CD4-positive, alpha-beta memory T cell (primary cell): ENCODE measurements at regions of chr20 and their contacts with region 1.

Region 1: DNA sequence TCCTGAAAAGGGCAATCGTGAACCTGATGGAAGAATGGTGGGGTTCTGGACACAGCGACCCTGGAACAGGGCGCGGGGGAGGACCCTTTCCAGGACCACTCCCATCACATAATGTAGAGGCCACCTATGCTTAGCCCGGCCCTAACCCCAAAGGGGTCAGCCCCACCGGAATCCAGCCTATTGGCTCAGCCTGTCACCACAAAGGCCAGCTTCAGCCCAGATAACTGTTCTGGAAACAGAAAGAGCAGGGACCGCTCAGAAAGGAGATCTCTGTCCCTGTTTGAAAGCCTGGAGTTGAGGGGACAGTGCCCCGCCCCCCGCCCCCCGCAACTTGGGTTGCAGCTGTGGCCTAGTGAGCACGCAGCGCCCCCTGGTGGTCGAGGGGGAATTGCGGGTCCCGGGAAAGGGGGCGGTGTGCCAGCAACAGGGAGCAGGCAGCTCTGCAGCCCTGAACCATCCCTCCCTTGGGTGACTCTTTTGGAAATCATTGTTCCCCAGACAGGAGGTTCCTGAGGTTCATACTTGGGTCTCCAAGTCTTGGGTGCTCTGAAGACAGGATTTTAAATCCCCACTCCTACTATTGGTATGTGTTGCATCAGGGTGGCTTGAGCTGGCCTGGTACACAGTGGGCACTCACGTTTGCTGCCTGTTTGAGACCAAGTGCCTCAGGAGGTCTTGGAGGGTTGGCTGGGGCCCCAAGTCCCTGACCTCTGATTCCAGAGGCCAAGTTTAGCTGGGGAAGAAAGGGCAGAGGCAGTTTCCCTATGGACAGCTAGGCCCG is 1.5 kb downstream of the SIGLEC1 start:
- DNase-seq: peak; percentile 55 to 69 (median 57)
- H3K4me3 ChIP-seq: no peak overlapping the region
- H3K4me3 Mint-ChIP-seq: no peak overlapping the region
- H3K27ac ChIP-seq: no peak overlapping the region
- H3K27ac Mint-ChIP-seq: no peak overlapping the region
- H3K4me1 ChIP-seq: no peaks in the 10 kb centered on the region
- H3K4me1 Mint-ChIP-seq: peaks cover 0 to 10% (median 2%) of the 10 kb centered on the region in 4 donors
- H3K27me3 ChIP-seq: no peaks in the 10 kb centered on the region
- H3K27me3 Mint-ChIP-seq: peaks cover 0 to 8% of the 10 kb centered on the region in 2 donors

Region 2: DNA sequence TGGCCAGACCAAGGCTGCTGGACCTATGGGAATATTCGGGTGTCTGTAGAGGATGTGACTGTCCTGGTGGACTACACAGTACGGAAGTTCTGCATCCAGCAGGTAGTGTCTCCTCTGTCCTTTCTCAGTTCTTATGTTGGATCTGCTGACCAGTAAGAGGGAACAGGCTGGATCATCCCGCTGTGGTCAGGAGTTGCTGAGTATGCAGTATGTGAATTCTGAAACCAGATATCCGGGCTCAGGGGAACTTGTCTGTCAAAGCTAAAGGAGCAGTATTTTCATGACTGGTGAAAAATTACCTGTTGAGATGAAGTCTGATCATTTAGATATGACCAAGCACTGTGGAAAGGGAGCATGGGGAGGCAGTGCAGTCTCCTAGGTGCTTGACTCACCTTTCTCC is 689.6 kb before region 1 on chr20:
- CTCF ChIA-PET with region 1: no interaction called
- POLR2A ChIA-PET with region 1: no interaction called
- intact Hi-C with region 1: no loop called
- DNase-seq: no peak
- H3K4me3 ChIP-seq: no peak overlapping the region
- H3K4me3 Mint-ChIP-seq: no peak overlapping the region
- H3K27ac ChIP-seq: no peak overlapping the region
- H3K27ac Mint-ChIP-seq: peak overlapping the region in 2 of 7 donors; percentile 1 to 17
- H3K4me1 ChIP-seq: no peaks in the 10 kb centered on the region
- H3K4me1 Mint-ChIP-seq: no peaks in the 10 kb centered on the region
- H3K27me3 ChIP-seq: no peaks in the 10 kb centered on the region
- H3K27me3 Mint-ChIP-seq: no peaks in the 10 kb centered on the region

Region 3: DNA sequence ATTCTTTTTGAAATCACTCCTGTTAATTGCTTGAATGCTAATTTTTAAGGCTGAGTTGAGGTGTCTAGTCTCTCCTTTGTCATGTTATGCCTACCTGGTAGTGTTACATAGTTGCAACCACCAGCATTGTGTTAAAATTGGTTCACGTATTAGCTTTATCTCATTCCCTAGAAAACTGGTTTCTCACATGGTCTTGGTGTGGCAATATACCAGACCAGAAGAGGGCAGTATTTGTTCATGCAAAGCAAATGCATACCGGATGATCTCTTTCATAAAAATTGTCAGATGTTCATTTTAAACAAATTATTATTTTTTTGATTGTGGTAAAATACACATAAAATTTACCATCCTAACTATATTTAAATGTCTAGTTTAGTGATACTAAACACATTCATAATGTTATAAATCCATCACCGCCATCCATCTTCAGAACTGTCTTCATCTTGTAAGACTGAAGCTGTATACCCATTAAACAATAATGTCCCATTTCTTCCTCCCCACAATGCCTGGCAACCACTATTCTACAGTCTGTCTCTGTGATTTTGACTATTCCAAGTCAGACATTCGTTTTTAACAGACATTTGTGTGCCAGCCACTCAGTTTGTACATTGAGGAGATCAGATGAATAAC is 147.2 kb before region 1 on chr20:
- CTCF ChIA-PET with region 1: interaction called, 11 read pairs
- POLR2A ChIA-PET with region 1: no interaction called
- intact Hi-C with region 1: no loop called
- DNase-seq: peak in 4 of 5 donors; percentile 12 to 39 (median 24)
- H3K4me3 ChIP-seq: no peak overlapping the region
- H3K4me3 Mint-ChIP-seq: no peak overlapping the region
- H3K27ac ChIP-seq: no peak overlapping the region
- H3K27ac Mint-ChIP-seq: no peak overlapping the region
- H3K4me1 ChIP-seq: no peaks in the 10 kb centered on the region
- H3K4me1 Mint-ChIP-seq: peaks cover 0 to 5% (median 1%) of the 10 kb centered on the region in 4 donors
- H3K27me3 ChIP-seq: no peaks in the 10 kb centered on the region
- H3K27me3 Mint-ChIP-seq: no peaks in the 10 kb centered on the region

Region 4: DNA sequence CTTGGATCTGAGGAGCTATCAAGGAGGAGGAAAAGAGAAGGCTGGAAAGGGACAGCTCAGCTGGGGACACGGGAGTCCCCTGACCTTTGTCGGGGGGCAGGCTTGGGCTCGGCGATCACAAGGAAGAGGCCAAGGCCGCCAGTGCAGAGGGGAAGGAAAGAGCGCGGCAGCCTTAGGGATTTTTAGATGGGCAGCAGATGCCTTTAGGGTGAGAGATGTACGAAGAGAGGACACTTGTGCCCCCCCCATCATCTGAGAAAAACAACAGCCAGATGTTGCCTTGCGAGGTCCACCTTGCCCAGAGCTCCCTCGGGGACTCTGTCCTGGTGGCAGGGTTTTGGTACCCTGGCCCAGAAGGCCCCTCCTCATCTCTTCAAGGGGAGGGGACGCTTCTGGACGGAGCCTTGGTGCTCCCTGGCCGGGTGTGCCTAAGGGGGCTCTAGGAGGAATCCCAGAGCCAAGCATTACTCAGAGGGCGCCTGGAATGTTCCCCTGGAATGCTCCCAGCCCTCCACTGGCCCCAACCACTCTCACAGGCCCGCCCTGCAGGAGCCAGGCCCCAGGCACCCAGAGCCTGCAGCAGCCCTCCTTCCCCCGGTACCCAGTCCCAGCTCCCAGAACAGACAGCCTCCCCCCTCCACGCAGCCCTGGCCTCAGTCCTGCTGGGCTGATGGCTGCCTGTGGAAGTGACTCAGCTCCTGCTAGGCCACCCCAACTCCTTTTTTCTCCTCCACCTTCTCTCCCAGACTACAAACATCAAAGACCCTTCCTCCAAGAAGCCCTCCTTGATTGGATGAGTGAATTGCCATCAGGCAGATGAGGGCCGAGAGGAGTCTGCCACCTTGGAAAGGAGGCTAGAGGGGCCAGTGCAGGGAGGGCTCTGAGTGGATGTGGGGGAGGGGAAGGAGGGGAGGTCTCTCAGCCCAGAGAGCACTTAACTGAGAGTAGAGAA is 30.9 kb before region 1 on chr20:
- CTCF ChIA-PET with region 1: interaction called, 13 read pairs
- POLR2A ChIA-PET with region 1: no interaction called
- intact Hi-C with region 1: loop called (anchors 1 kb)
- DNase-seq: no peak
- H3K4me3 ChIP-seq: no peak overlapping the region
- H3K4me3 Mint-ChIP-seq: peak overlapping the region in 1 of 8 donors; percentile 31
- H3K27ac ChIP-seq: no peak overlapping the region
- H3K27ac Mint-ChIP-seq: no peak overlapping the region
- H3K4me1 ChIP-seq: no peaks in the 10 kb centered on the region
- H3K4me1 Mint-ChIP-seq: peaks cover 3 to 9% (median 7%) of the 10 kb centered on the region in 4 donors
- H3K27me3 ChIP-seq: peaks cover 7% of the 10 kb centered on the region
- H3K27me3 Mint-ChIP-seq: peaks cover 38 to 48% of the 10 kb centered on the region in 2 donors

Region 5: DNA sequence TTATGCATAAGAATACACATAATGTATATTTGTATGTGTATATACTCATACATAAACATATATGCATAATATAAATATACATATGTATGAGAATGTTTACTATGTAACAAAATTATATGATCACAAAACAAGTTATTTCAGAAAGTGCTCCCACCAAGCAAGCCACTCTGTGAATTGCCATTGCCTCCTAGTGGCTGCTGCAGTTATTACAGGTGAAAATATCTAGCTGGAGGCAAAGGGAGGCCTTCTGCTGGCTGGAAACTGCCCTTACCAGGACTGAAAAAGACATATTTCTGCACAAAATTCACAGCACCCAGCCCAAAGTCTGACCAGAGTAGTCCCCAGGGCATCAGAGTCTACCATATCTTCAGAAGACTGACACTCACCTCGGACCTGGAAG is 14.7 kb before region 1 on chr20:
- CTCF ChIA-PET with region 1: interaction called, 13 read pairs
- POLR2A ChIA-PET with region 1: no interaction called
- intact Hi-C with region 1: no loop called
- DNase-seq: no peak
- H3K4me3 ChIP-seq: no peak overlapping the region
- H3K4me3 Mint-ChIP-seq: no peak overlapping the region
- H3K27ac ChIP-seq: no peak overlapping the region
- H3K27ac Mint-ChIP-seq: no peak overlapping the region
- H3K4me1 ChIP-seq: no peaks in the 10 kb centered on the region
- H3K4me1 Mint-ChIP-seq: no peaks in the 10 kb centered on the region
- H3K27me3 ChIP-seq: no peaks in the 10 kb centered on the region
- H3K27me3 Mint-ChIP-seq: peaks cover 2% of the 10 kb centered on the region in 2 donors

Region 6: GRCh38 chr20:3846740-3847428 is 136.0 kb after region 1 on chr20 and contains the start of gene MAVS:
- CTCF ChIA-PET with region 1: no interaction called
- POLR2A ChIA-PET with region 1: no interaction called
- intact Hi-C with region 1: no loop called
- DNase-seq: peak; percentile 81 to 84 (median 81)
- H3K4me3 ChIP-seq: peak within 1 kb of the TSS; percentile 45 to 92
- H3K4me3 Mint-ChIP-seq: peak within 1 kb of the TSS; percentile 79 to 93 (median 92)
- H3K27ac ChIP-seq: peak within 1 kb of the TSS; percentile 85
- H3K27ac Mint-ChIP-seq: peak within 1 kb of the TSS; percentile 78 to 97 (median 93)
- H3K4me1 ChIP-seq: peaks cover 27% of the 10 kb centered on the region
- H3K4me1 Mint-ChIP-seq: peaks cover 20 to 38% (median 25%) of the 10 kb centered on the region in 4 donors
- H3K27me3 ChIP-seq: no peaks in the 10 kb centered on the region
- H3K27me3 Mint-ChIP-seq: no peaks in the 10 kb centered on the region
- total RNA-seq, gene MAVS: 45.2 to 49.3 TPM

Region 7: DNA sequence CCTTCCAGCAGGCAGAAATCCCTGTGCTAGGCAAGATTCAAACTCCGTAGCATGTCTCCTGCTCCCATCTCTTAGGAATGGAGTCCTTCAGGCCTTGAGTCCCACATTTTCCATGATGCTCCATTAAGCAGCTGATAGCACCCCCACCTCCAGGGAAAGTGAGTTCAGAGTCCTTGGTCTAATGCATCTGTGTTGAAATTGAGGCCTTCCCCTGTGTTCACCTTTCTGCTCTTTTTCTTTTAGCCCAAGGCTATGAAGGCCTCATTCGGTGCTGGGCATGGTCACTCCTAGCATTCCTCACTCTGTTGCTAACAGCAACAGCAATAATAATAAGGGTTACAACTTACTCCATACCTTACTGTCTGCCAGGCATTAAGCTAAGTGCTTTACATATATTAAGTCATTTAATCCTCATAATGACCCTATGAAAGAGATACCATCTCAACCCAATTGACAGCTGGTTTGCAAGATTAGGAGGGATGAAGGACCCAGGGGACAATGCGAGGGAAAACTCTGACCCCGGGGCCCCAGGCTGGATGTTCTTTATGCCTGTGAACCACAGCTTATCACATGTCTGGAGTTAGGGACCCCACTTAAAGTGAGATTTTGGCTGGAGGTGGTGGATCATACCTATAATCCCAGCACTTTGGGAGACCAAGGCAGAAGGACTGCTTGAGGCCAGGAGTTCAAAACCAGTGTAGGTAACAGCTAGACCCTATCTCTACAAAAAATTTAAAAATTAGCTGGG is 160.8 kb after region 1 on chr20:
- CTCF ChIA-PET with region 1: no interaction called
- POLR2A ChIA-PET with region 1: no interaction called
- intact Hi-C with region 1: no loop called
- DNase-seq: no peak
- H3K4me3 ChIP-seq: no peak overlapping the region
- H3K4me3 Mint-ChIP-seq: no peak overlapping the region
- H3K27ac ChIP-seq: no peak overlapping the region
- H3K27ac Mint-ChIP-seq: peak overlapping the region in 3 of 7 donors; percentile 20 to 27 (median 25)
- H3K4me1 ChIP-seq: no peaks in the 10 kb centered on the region
- H3K4me1 Mint-ChIP-seq: peaks cover 4 to 23% (median 7%) of the 10 kb centered on the region in 4 donors
- H3K27me3 ChIP-seq: no peaks in the 10 kb centered on the region
- H3K27me3 Mint-ChIP-seq: no peaks in the 10 kb centered on the region